ENCODE measurements at regions of chr11 and their contacts with region 1.

Region 1: GRCh38 chr11:59429924-59430516 is 3.8 kb upstream of the OR5A2 start:
- DNase-seq: peak; percentile 59
- H3K4me3 Mint-ChIP-seq: no peak overlapping the region
- H3K27ac Mint-ChIP-seq: no peak overlapping the region
- H3K4me1 Mint-ChIP-seq: no peaks in the 10 kb centered on the region
- H3K27me3 Mint-ChIP-seq: peaks cover 2% of the 10 kb centered on the region

Region 2: GRCh38 chr11:59207988-59208451 is 222.0 kb before region 1 on chr11:
- CTCF ChIA-PET with region 1: interaction called, 3 read pairs
- intact Hi-C with region 1: loop called (anchors 1 kb)
- DNase-seq: peak; percentile 53
- H3K4me3 Mint-ChIP-seq: no peak overlapping the region
- H3K27ac Mint-ChIP-seq: no peak overlapping the region
- H3K4me1 Mint-ChIP-seq: peaks cover 35% of the 10 kb centered on the region
- H3K27me3 Mint-ChIP-seq: peaks cover 26% of the 10 kb centered on the region

Region 3: GRCh38 chr11:59463190-59463641 is 33.2 kb after region 1 on chr11:
- CTCF ChIA-PET with region 1: no interaction called
- intact Hi-C with region 1: no loop called
- DNase-seq: no peak
- H3K4me3 Mint-ChIP-seq: no peak overlapping the region
- H3K27ac Mint-ChIP-seq: no peak overlapping the region
- H3K4me1 Mint-ChIP-seq: no peaks in the 10 kb centered on the region
- H3K27me3 Mint-ChIP-seq: peaks cover 16% of the 10 kb centered on the region

Region 4: DNA sequence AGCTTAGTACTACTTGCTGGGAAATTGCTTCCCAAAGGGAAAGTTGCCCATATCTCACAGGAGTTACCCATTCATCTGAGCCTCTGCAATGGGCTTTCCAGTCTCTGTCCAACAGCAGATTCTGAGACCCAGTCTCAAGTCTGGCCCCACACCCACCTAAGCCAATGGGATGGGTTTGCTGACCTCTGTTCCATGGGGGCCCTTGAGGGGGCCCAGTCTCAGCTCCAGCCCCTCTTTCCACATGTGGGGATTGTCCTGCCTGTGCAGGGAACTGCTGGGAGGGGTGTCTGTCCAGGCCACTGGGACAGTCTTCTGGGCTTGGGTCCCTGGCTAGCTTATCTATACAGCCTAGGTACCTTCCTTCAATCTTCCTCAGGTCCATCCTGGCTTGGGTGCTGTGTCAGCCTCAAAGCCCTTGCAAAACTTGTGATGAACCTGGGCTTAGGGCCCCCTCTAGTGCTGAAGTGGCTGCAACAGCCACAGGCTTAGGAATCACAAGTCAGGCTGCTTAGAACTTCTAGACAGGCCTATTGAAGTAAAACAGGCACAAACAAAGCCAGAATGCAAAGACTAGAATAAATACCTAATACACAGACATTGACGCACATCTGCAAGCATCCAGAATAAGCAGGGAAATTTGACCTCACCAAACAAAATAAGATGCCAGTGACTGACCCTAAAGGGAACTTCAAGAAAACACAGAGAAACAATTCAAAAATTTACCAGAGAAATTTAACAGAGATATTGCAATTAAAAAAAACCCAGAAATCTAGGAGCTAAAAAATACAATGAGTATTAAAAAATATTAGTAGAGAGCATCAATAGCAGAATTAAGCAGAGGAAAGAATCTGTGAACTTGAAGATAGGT is 250.5 kb after region 1 on chr11:
- CTCF ChIA-PET with region 1: interaction called, 4 read pairs
- intact Hi-C with region 1: loop called (anchors 1 kb)
- DNase-seq: peak; percentile 70
- H3K4me3 Mint-ChIP-seq: no peak overlapping the region
- H3K27ac Mint-ChIP-seq: no peak overlapping the region
- H3K4me1 Mint-ChIP-seq: no peaks in the 10 kb centered on the region
- H3K27me3 Mint-ChIP-seq: peaks cover 6% of the 10 kb centered on the region